ENCODE measurements at regions of chr16 and their contacts with region 1.

Region 1: GRCh38 chr16:4288148-4288921 is 15.5 kb upstream of the TFAP4 start:
- DNase-seq: peak; percentile 73
- ATAC-seq: peak; percentile 65
- H3K4me3 ChIP-seq: peak overlapping the region; percentile 42; the same call in 1 of the 2 replicates
- H3K27ac ChIP-seq: no peak overlapping the region
- H3K4me1 ChIP-seq: peaks cover 25% of the 10 kb centered on the region
- H3K27me3 ChIP-seq: no peaks in the 10 kb centered on the region
- CTCF ChIP-seq: peak; percentile 88

Region 2: GRCh38 chr16:4176612-4177417 is 111.5 kb before region 1 on chr16:
- CTCF ChIA-PET with region 1: no interaction called
- POLR2A ChIA-PET with region 1: no interaction called
- intact Hi-C with region 1: no loop called
- DNase-seq: peak; percentile 54
- ATAC-seq: peak; percentile 99
- H3K4me3 ChIP-seq: no peak overlapping the region
- H3K27ac ChIP-seq: no peak overlapping the region
- H3K4me1 ChIP-seq: peaks cover 9% of the 10 kb centered on the region
- H3K27me3 ChIP-seq: no peaks in the 10 kb centered on the region
- CTCF ChIP-seq: no peak

Region 3: DNA sequence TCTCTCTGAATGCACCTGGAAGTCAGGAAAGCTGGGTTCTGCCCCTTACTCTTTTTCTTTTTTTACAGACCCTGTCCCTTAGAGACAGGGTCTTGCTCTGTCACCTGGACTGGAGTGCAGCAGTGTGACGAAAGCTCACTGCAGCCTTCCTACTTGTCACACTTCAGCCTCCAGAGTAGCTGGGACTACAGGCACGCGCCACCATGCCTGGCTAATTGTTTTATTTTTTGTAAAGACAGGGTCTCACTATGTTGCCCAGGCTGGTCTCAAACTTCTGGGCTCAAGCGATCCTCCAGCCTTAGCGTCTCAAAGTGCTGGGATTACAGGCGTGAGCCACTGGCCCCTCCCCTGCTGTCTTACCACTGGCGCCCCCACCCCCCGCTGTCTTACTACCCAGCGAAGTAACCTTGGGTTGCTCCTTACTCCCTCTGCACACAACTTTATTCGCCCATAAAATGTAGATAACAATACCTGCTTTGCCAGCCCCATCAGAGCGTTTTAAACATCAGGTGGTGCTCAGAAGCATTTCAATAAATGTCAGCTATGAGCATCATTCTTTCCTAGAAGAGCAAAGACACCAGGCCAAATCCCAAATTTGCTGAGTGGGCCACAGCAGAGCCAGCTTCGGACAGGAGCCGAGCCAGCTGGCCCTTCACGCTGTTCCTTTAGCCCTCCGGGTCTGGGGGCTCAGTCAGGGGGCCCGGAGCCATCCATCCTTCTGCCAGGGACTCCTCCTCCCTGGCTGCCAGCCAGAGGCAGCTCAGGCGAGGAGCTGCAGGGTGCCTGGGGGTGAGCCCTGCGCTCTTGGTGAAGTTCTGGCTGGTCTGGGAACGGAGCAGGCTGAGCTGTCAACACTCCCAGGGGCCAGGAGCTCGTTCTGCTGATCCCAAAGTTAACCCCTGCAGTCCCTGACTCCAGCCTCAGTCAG is 70.9 kb before region 1 on chr16:
- CTCF ChIA-PET with region 1: no interaction called
- POLR2A ChIA-PET with region 1: no interaction called
- intact Hi-C with region 1: no loop called
- DNase-seq: no peak
- ATAC-seq: no peak
- H3K4me3 ChIP-seq: no peak overlapping the region
- H3K27ac ChIP-seq: no peak overlapping the region
- H3K4me1 ChIP-seq: peaks cover 10% of the 10 kb centered on the region
- H3K27me3 ChIP-seq: no peaks in the 10 kb centered on the region
- CTCF ChIP-seq: no peak

Region 4: DNA sequence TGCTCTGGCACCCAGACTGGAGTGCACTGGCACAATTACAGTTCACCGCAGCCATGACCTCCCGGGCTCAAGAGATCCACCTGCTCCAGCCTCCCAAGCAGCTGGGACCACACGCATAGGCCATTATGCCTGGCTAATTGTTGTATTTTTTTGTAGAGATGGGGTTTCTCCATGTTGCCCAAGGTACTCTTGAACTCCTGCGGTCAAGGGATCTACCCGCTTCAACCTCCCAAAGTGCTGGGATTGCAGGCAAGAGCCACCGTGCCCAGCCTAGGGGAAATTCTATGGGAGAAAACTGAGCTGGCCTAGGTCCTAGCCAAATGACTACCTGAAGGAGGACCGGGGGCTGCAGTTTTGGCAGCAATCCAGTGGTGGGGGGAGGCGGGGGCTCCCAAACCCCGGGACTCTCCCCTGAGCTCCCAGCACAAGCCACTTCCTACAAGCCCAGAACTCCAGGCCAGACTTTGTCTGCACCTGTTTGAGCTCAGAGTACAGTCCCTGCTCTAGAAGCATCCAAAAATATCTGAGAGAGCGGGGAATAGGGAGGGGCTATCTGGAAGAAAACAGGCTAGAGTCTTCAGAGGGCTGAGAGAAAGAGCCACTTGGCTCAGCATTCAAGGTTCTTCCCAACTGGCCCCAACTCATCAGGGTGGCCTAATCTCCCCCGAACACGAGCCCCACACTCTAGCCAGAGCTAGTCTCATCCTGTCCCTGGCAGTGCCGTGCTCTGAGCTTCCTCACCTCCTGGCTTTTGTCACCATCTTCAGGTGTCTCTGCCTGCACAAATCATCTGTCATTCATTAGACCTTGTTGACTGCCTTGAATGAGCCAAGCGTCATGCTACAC is 55.6 kb before region 1 on chr16:
- CTCF ChIA-PET with region 1: no interaction called
- POLR2A ChIA-PET with region 1: no interaction called
- intact Hi-C with region 1: no loop called
- DNase-seq: no peak
- ATAC-seq: no peak
- H3K4me3 ChIP-seq: no peak overlapping the region
- H3K27ac ChIP-seq: no peak overlapping the region
- H3K4me1 ChIP-seq: no peaks in the 10 kb centered on the region
- H3K27me3 ChIP-seq: no peaks in the 10 kb centered on the region
- CTCF ChIP-seq: no peak

Region 5: GRCh38 chr16:4350787-4351659 is 62.7 kb after region 1 on chr16 and contains the start of gene PAM16:
- CTCF ChIA-PET with region 1: interaction called, 10 read pairs
- POLR2A ChIA-PET with region 1: no interaction called
- intact Hi-C with region 1: no loop called
- DNase-seq: peak; percentile 90
- ATAC-seq: peak; percentile 93
- H3K4me3 ChIP-seq: peak within 1 kb of the TSS; percentile 89
- H3K27ac ChIP-seq: peak within 1 kb of the TSS; percentile 64
- H3K4me1 ChIP-seq: peaks cover 7% of the 10 kb centered on the region; the same call in 1 of the 2 replicates
- H3K27me3 ChIP-seq: no peaks in the 10 kb centered on the region
- CTCF ChIP-seq: no peak
- total RNA-seq, gene PAM16: 91.2 and 95.5 TPM in 2 replicates